ENCODE measurements at regions of chr13 and their contacts with region 1.

Region 1: GRCh38 chr13:110712849-110713641 is 455 bp upstream of the ING1 start:
- DNase-seq: peak; percentile 98
- H3K4me3 ChIP-seq: peak overlapping the region; percentile 92
- H3K27me3 ChIP-seq: no peaks in the 10 kb centered on the region
- CTCF ChIP-seq: no peak

Region 2: DNA sequence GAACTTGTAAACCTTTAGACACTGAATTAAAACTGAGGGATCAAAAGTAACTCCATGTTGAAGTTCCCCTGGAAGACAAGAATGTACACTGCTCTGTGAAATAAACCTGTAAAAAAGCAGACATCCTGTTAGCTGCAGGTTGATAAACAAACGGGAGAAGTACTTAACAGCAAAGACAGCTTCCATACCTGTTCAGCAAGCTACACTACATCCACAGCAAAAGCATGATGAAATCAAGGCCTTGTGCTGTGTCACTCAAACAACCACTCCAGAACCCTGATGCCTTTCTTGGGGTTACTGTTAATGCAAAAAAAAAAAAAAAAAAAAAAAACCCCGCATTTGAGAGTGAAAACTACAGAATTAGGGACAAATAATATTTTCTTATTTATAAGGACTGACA is 181.1 kb after region 1 on chr13:
- CTCF ChIA-PET with region 1: no interaction called
- POLR2A ChIA-PET with region 1: interaction called, 17 read pairs
- DNase-seq: no peak
- H3K4me3 ChIP-seq: no peak overlapping the region
- H3K27me3 ChIP-seq: no peaks in the 10 kb centered on the region
- CTCF ChIP-seq: no peak